BJ (cell line): ENCODE measurements at regions of chr2 and their contacts with region 1.

Region 1: GRCh38 chr2:11124503-11125068 is 30.7 kb upstream of the SLC66A3 start:
- DNase-seq: no peak
- H3K4me3 ChIP-seq: no peak overlapping the region
- H3K27me3 ChIP-seq: no peaks in the 10 kb centered on the region; the same call in 1 of the 2 replicates
- CTCF ChIP-seq: peak; percentile 97

Region 2: DNA sequence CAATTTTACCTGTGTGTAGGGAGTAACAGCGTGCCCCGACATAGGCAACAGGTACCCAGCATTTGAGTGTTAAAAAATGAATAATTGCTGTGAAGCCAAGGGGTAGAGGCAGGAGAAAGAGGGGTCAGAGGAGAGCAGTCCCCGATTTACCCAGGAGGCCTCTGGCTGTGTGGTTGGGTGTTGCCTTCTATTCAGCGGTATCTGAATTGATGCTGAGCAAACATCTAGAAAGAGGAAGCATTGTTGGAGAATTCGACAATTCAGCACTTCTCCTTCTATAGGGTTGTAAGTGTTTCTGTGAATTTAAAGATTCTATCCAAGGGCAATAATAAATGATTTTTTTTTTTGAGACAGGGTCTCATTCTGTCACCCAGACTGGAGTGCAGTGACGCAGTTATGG is 303.3 kb before region 1 on chr2:
- CTCF ChIA-PET with region 1: interaction called, 10 read pairs
- POLR2A ChIA-PET with region 1: no interaction called
- DNase-seq: no peak
- H3K4me3 ChIP-seq: no peak overlapping the region
- H3K27me3 ChIP-seq: peaks cover 23% of the 10 kb centered on the region
- CTCF ChIP-seq: no peak

Region 3: GRCh38 chr2:10832203-10832936 is 292.2 kb before region 1 on chr2:
- CTCF ChIA-PET with region 1: interaction called, 421 read pairs
- POLR2A ChIA-PET with region 1: no interaction called
- DNase-seq: no peak
- H3K4me3 ChIP-seq: no peak overlapping the region
- H3K27me3 ChIP-seq: peaks cover 17% of the 10 kb centered on the region
- CTCF ChIP-seq: peak; percentile 98

Region 4: DNA sequence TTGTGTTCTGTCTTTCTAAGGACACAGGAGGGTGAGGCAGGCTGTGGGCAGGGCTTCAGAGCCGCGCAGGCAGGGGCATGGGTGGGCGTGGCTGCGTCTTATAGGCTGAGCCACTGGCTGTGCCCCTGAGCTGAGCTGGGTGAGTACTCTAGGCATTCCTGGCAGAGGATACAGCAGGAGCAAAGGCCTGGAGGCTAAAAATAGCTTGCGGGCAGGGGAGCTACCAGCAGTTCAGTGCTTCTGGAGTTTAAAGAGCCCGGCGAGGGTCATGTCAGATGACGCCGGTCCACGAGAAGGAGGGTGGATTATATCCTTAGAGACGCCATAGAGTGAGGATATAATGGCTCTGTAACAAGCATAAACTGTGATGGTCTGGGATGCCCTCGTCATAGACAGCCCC is 280.5 kb before region 1 on chr2:
- CTCF ChIA-PET with region 1: interaction called, 421 read pairs
- POLR2A ChIA-PET with region 1: no interaction called
- DNase-seq: no peak
- H3K4me3 ChIP-seq: no peak overlapping the region
- H3K27me3 ChIP-seq: peaks cover 3% of the 10 kb centered on the region
- CTCF ChIP-seq: no peak

Region 5: DNA sequence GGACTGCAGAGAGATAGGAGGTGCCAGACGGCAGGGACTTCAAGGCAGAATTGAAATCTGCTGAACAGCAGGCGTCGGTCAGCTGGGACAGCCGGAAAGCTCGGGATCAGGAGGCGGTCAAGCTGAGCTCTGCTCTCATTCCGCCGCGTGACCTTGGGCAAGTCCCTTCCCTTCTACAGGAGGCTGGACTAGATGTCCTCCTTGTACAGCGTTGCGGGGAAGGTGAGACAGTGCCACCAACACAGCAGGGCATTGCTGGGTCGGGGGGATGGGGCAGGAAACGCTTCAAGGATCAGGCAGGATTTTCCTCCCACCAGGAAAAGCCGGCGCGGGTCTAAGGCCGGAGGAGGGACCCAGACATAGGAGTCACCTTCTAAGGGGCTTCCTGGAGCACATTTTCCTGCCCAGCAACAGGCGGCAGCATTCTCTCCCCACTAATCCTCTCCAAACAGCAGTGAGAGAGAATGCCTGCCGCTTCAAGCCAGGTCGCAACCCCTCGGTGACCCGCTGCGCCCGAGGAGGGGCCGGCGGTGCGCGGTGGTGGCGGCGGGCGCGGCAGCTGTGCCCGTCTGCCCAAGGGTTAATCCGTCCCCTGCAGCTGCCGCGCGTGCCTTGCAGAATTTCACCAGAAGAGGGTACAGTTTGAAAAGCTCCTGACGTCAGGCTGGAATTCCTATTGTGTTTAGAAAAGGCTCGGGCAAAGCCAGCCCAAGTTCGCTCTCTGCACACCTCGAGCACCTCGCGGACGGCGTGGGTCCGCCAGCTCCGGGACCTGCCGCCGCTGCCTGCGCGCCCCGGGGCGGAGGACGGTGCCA is 213.1 kb before region 1 on chr2 and contains the start of gene KCNF1:
- CTCF ChIA-PET with region 1: interaction called, 23 read pairs
- POLR2A ChIA-PET with region 1: no interaction called
- DNase-seq: no peak
- H3K4me3 ChIP-seq: peak within 1 kb of the TSS; percentile 23
- H3K27me3 ChIP-seq: peaks cover 26% of the 10 kb centered on the region
- CTCF ChIP-seq: peak; percentile 35; the same call in 1 of the 2 replicates
- polyA plus RNA-seq, gene KCNF1: not detected in 2 replicates